Sigmoid colon (tissue), 7 donors: ENCODE measurements at regions of chr19 and their contacts with region 1.

Region 1: GRCh38 chr19:8005534-8006256 is at the start of gene ELAVL1:
- DNase-seq: peak; percentile 93
- H3K4me3 ChIP-seq: peak within 1 kb of the TSS; percentile 63 to 85 (median 71)
- H3K27ac ChIP-seq: peak within 1 kb of the TSS; percentile 83 to 92 (median 86)
- H3K4me1 ChIP-seq: peaks cover 0 to 50% (median 44%) of the 10 kb centered on the region in 4 donors
- H3K27me3 ChIP-seq: no peaks in the 10 kb centered on the region
- CTCF ChIP-seq: no peak
- EP300 ChIP-seq: no peak
- POLR2A ChIP-seq: no peak
- total RNA-seq, gene ELAVL1: 15.8 to 20.3 (median 17.1) TPM

Region 2: GRCh38 chr19:7852851-7853769 is 152.6 kb before region 1 on chr19:
- intact Hi-C with region 1: loop called (anchors 10 kb)
- DNase-seq: no peak
- H3K4me3 ChIP-seq: no peak overlapping the region
- H3K27ac ChIP-seq: peak overlapping the region in 2 of 4 donors; percentile 12 to 19
- H3K4me1 ChIP-seq: peaks cover 0 to 9% (median 7%) of the 10 kb centered on the region in 4 donors
- H3K27me3 ChIP-seq: peaks cover 0 to 48% (median 17%) of the 10 kb centered on the region in 3 donors
- CTCF ChIP-seq: peak; percentile 44 to 86 (median 60)
- EP300 ChIP-seq: no peak
- POLR2A ChIP-seq: no peak

Region 3: GRCh38 chr19:7943444-7944176 is 62.1 kb before region 1 on chr19 and contains the start of gene TIMM44:
- intact Hi-C with region 1: loop called (anchors 1 kb)
- DNase-seq: peak; percentile 100
- H3K4me3 ChIP-seq: peak within 1 kb of the TSS; percentile 68 to 87 (median 75)
- H3K27ac ChIP-seq: peak within 1 kb of the TSS; percentile 94 to 99 (median 96)
- H3K4me1 ChIP-seq: peaks cover 3 to 53% (median 37%) of the 10 kb centered on the region in 4 donors
- H3K27me3 ChIP-seq: no peaks in the 10 kb centered on the region
- CTCF ChIP-seq: no peak
- EP300 ChIP-seq: no peak
- POLR2A ChIP-seq: peak; percentile 60 to 71
- total RNA-seq, gene TIMM44: 51.7 to 80.1 (median 78.6) TPM

Region 4: DNA sequence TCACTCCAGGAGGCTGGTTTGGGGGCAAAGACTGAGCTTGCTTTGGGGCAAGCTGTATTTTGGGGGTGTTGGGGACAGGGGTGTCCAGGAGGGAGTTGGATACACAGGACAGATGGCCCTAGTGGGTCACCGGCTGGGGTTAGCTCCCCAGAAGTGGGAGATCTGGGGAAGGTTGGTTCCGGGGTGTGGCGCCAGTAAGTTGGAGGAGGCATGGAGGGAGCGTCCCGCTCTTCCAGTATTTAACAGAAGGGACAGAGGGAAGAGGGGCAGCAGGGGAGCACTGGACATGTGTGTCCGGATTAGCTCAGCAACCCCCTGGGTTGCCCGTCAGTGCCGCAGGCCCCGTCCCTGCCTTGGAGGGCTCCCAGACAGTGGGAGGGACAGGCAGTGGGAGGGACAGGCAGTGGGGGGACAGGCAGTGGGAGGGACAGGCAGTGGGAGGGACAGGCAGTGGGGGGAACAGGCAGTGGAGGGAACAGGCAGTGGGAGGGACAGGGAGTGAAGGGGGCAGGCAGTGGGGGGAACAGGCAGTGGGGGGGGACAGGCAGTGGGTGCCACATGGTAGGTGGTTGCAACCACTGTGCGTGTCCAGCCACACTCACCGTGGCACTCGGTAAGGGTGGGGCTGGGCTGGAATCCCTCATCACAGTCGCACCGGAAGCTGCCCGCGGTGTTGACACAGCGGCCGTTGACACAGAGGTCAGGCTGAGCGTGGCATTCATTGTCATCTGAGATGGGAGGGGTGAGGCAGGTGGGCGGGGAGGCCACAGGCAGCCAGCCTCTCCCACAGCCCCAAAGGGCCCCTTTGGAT is 80.1 kb after region 1 on chr19:
- intact Hi-C with region 1: no loop called
- DNase-seq: no peak
- H3K4me3 ChIP-seq: no peak overlapping the region
- H3K27ac ChIP-seq: no peak overlapping the region
- H3K4me1 ChIP-seq: no peaks in the 10 kb centered on the region
- H3K27me3 ChIP-seq: no peaks in the 10 kb centered on the region
- CTCF ChIP-seq: no peak
- EP300 ChIP-seq: no peak
- POLR2A ChIP-seq: no peak